WTC11 (cell line): ENCODE measurements at regions of chr2 and their contacts with region 1.

Region 1: GRCh38 chr2:241950413-241951315 is 81.1 kb downstream of the RTP5 start:
- DNase-seq: peak; percentile 95
- ATAC-seq: peak; percentile 84
- H3K4me3 Mint-ChIP-seq: no peak overlapping the region
- H3K27ac Mint-ChIP-seq: no peak overlapping the region
- H3K4me1 Mint-ChIP-seq: peaks cover 19% of the 10 kb centered on the region
- H3K27me3 Mint-ChIP-seq: peaks cover 45% of the 10 kb centered on the region
- CTCF ChIP-seq: peak; percentile 75

Region 2: GRCh38 chr2:241965931-241966412 is 15.3 kb after region 1 on chr2:
- CTCF ChIA-PET with region 1: interaction called, 10 read pairs
- POLR2A ChIA-PET with region 1: no interaction called
- DNase-seq: no peak
- ATAC-seq: peak; percentile 34
- H3K4me3 Mint-ChIP-seq: no peak overlapping the region
- H3K27ac Mint-ChIP-seq: no peak overlapping the region
- H3K4me1 Mint-ChIP-seq: no peaks in the 10 kb centered on the region
- H3K27me3 Mint-ChIP-seq: no peaks in the 10 kb centered on the region
- CTCF ChIP-seq: no peak

Region 3: GRCh38 chr2:241999184-241999583 is 48.5 kb after region 1 on chr2:
- CTCF ChIA-PET with region 1: interaction called, 16 read pairs
- POLR2A ChIA-PET with region 1: no interaction called
- DNase-seq: no peak
- ATAC-seq: no peak
- H3K4me3 Mint-ChIP-seq: no peak overlapping the region
- H3K27ac Mint-ChIP-seq: no peak overlapping the region
- H3K4me1 Mint-ChIP-seq: no peaks in the 10 kb centered on the region
- H3K27me3 Mint-ChIP-seq: no peaks in the 10 kb centered on the region; the same call in 1 of the 2 replicates
- CTCF ChIP-seq: no peak

Region 4: GRCh38 chr2:242020196-242021004 is 69.7 kb after region 1 on chr2:
- CTCF ChIA-PET with region 1: interaction called, 28 read pairs
- POLR2A ChIA-PET with region 1: no interaction called
- DNase-seq: no peak
- ATAC-seq: no peak
- H3K4me3 Mint-ChIP-seq: no peak overlapping the region
- H3K27ac Mint-ChIP-seq: no peak overlapping the region
- H3K4me1 Mint-ChIP-seq: no peaks in the 10 kb centered on the region
- H3K27me3 Mint-ChIP-seq: peaks cover 47% of the 10 kb centered on the region
- CTCF ChIP-seq: no peak